Caco-2 (cell line): ENCODE measurements at regions of chr12 and their contacts with region 1.

Region 1: DNA sequence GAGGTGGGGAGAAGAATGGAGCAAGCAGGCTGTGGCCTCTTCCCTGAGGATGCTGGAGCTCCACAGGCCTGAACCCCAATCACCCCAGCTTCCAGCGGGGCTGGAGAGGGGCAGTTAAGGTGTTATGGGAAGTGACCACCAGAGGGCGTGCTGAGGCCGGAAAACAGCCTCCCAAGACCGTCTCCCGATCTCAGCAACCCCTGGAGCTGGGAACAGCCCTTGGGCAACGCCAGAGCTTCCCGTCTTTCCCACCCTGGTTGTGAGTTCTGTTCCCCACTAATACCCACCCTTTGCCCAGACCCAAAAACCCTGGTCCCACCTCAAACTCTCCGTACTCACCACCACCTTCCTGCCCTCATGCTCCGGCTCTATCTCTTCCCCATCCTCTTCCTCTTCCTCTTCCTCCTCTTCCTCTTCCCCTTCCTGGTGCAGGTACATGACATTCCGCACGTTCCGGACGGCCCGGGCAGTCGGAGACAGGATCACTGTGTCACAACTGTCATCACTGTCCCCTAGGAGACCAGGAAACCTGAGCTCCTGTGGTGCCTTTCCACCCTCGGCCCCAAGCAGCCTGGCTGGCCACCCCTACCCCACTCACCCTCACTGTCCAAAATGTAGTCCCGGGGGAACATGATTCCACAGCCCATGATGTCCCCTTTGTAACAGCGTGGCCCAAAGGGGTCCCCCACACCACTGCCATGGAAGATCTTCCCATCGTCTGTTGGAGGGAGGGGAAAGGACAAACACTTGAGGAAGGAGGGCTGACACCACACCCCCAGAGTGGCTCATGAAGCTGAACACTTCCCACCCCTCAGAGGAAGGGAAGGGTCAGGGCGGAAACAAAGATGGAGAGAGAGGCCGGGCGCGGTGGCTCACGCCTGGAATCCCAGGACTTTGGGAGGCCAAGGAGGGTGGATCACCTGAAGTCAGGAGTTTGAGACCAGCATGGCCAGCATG is 12.9 kb downstream of the SPRYD3 start:
- DNase-seq: peak; percentile 79 to 83
- H3K4me3 ChIP-seq: no peak overlapping the region
- H3K4me3 Mint-ChIP-seq: peak overlapping the region; percentile 31
- H3K27ac Mint-ChIP-seq: peak overlapping the region; percentile 14
- H3K4me1 ChIP-seq: peaks cover 7% of the 10 kb centered on the region
- H3K4me1 Mint-ChIP-seq: peaks cover 6% of the 10 kb centered on the region
- H3K27me3 ChIP-seq: no peaks in the 10 kb centered on the region
- H3K27me3 Mint-ChIP-seq: no peaks in the 10 kb centered on the region
- CTCF ChIP-seq: peak; percentile 76 to 86

Region 2: DNA sequence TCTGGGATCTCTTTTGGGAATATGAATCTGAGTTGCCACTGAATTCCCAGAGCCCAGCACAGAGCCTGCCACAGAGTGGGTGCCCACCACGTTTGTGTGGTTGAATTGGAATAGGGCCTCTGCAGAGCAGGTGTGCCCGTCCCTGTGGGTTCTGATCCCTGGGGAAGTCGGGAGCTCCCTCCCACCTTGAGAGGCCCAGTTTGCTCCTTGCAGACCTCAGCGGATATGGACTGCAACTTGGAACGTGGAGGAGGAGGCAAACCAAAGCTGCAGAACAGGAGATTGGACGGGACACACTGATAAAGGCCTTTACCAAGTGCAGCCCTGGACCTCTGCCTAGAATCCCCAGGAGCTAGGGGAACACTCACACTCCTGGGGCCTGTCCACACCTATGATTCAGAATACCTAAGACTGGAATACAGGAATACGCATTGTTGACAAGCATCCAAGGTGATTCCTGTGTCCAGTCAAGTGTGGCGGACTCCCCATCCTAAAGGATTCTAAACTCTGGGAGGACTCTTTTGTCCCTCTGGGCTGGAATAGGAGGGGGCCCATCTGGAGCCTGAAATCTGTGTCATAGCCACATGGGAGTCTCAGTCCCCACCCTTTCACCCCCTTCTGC is 291.5 kb before region 1 on chr12:
- CTCF ChIA-PET with region 1: no interaction called
- POLR2A ChIA-PET with region 1: no interaction called
- intact Hi-C with region 1: no loop called
- DNase-seq: no peak
- H3K4me3 ChIP-seq: no peak overlapping the region
- H3K4me3 Mint-ChIP-seq: no peak overlapping the region
- H3K27ac Mint-ChIP-seq: no peak overlapping the region
- H3K4me1 ChIP-seq: no peaks in the 10 kb centered on the region
- H3K4me1 Mint-ChIP-seq: no peaks in the 10 kb centered on the region
- H3K27me3 ChIP-seq: no peaks in the 10 kb centered on the region
- H3K27me3 Mint-ChIP-seq: peaks cover 6% of the 10 kb centered on the region
- CTCF ChIP-seq: no peak

Region 3: DNA sequence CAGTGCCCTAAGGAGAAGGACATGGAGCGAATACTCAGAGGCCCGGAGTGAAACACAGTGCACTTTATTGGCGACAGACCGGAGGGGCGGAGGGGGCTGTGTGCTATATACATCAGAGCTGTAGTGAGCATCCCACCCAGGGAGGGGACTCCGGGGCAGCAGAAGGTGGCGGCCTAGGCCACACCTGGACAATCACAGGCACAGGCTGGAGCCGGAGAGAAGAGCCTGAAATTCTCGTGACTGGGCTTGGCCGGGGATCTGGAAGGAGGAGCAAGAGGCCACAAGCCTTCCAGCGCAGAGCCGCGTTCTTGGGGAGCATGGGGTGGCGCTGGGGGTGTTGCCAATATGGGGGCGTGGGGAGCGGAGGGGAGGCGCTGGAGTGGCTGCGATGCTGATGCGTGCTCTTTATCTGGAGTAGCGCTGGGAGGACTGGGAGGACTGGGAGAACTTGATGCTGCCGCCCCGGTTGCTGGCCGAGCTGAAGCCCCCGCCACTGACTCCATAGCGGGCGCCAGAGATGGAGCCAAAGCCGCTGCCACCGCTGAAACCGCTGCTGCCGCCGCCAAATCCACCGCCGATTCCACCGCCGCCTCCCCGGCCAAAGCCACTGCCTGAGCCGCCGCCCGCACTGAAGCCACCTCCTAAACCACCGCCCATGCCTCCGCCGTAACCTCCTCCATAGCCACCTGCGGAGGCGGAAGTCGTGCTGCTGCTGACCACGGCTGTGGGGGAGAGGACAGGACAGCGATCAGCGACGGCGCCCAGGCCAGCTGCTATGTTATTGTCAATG is 276.4 kb before region 1 on chr12:
- CTCF ChIA-PET with region 1: no interaction called
- POLR2A ChIA-PET with region 1: no interaction called
- intact Hi-C with region 1: no loop called
- DNase-seq: no peak
- H3K4me3 ChIP-seq: no peak overlapping the region
- H3K4me3 Mint-ChIP-seq: no peak overlapping the region
- H3K27ac Mint-ChIP-seq: no peak overlapping the region
- H3K4me1 ChIP-seq: no peaks in the 10 kb centered on the region
- H3K4me1 Mint-ChIP-seq: no peaks in the 10 kb centered on the region
- H3K27me3 ChIP-seq: no peaks in the 10 kb centered on the region
- H3K27me3 Mint-ChIP-seq: peaks cover 7% of the 10 kb centered on the region
- CTCF ChIP-seq: no peak

Region 4: GRCh38 chr12:53054112-53054833 is 12.0 kb before region 1 on chr12:
- CTCF ChIA-PET with region 1: interaction called, 32 read pairs
- POLR2A ChIA-PET with region 1: no interaction called
- intact Hi-C with region 1: no loop called
- DNase-seq: peak; percentile 96 to 98
- H3K4me3 ChIP-seq: peak overlapping the region; percentile 78
- H3K4me3 Mint-ChIP-seq: peak overlapping the region; percentile 98
- H3K27ac Mint-ChIP-seq: peak overlapping the region; percentile 97
- H3K4me1 ChIP-seq: peaks cover 40% of the 10 kb centered on the region
- H3K4me1 Mint-ChIP-seq: peaks cover 14% of the 10 kb centered on the region
- H3K27me3 ChIP-seq: no peaks in the 10 kb centered on the region
- H3K27me3 Mint-ChIP-seq: no peaks in the 10 kb centered on the region
- CTCF ChIP-seq: no peak

Region 5: GRCh38 chr12:53079226-53080117 is 13.2 kb after region 1 on chr12 and contains the start of gene SPRYD3:
- CTCF ChIA-PET with region 1: interaction called, 47 read pairs
- POLR2A ChIA-PET with region 1: interaction called, 18 read pairs
- intact Hi-C with region 1: no loop called
- DNase-seq: peak; percentile 97 to 98
- H3K4me3 ChIP-seq: peak within 1 kb of the TSS; percentile 71
- H3K4me3 Mint-ChIP-seq: peak within 1 kb of the TSS; percentile 89
- H3K27ac Mint-ChIP-seq: peak within 1 kb of the TSS; percentile 94
- H3K4me1 ChIP-seq: peaks cover 4% of the 10 kb centered on the region; the same call in 1 of the 2 replicates
- H3K4me1 Mint-ChIP-seq: peaks cover 11% of the 10 kb centered on the region
- H3K27me3 ChIP-seq: no peaks in the 10 kb centered on the region
- H3K27me3 Mint-ChIP-seq: no peaks in the 10 kb centered on the region
- CTCF ChIP-seq: no peak
- total RNA-seq, gene SPRYD3: 8.2 and 8.8 TPM in 2 replicates

Region 6: GRCh38 chr12:53098982-53099651 is 32.9 kb after region 1 on chr12:
- CTCF ChIA-PET with region 1: interaction called, 95 read pairs
- POLR2A ChIA-PET with region 1: interaction called, 4 read pairs
- intact Hi-C with region 1: loop called (anchors 1 kb)
- DNase-seq: peak; percentile 90
- H3K4me3 ChIP-seq: no peak overlapping the region
- H3K4me3 Mint-ChIP-seq: peak overlapping the region; percentile 68
- H3K27ac Mint-ChIP-seq: peak overlapping the region; percentile 49
- H3K4me1 ChIP-seq: peaks cover 36% of the 10 kb centered on the region
- H3K4me1 Mint-ChIP-seq: peaks cover 42% of the 10 kb centered on the region
- H3K27me3 ChIP-seq: no peaks in the 10 kb centered on the region
- H3K27me3 Mint-ChIP-seq: no peaks in the 10 kb centered on the region
- CTCF ChIP-seq: peak; percentile 92 to 93

Region 7: GRCh38 chr12:53180220-53180930 is 114.1 kb after region 1 on chr12 and contains the starts of genes CSAD and ZNF740:
- CTCF ChIA-PET with region 1: interaction called, 17 read pairs
- POLR2A ChIA-PET with region 1: interaction called, 3 read pairs
- intact Hi-C with region 1: no loop called
- DNase-seq: peak; percentile 98
- H3K4me3 ChIP-seq: peak within 1 kb of the TSS; percentile 71
- H3K4me3 Mint-ChIP-seq: peak within 1 kb of the TSS; percentile 83
- H3K27ac Mint-ChIP-seq: peak within 1 kb of the TSS; percentile 85
- H3K4me1 ChIP-seq: peaks cover 21% of the 10 kb centered on the region
- H3K4me1 Mint-ChIP-seq: peaks cover 23% of the 10 kb centered on the region
- H3K27me3 ChIP-seq: no peaks in the 10 kb centered on the region
- H3K27me3 Mint-ChIP-seq: no peaks in the 10 kb centered on the region
- CTCF ChIP-seq: no peak
- total RNA-seq, gene CSAD: 20.1 and 23.0 TPM in 2 replicates
- total RNA-seq, gene ZNF740: 35.8 and 43.0 TPM in 2 replicates

Region 8: GRCh38 chr12:53190108-53190729 is 124.0 kb after region 1 on chr12:
- CTCF ChIA-PET with region 1: interaction called, 13 read pairs
- POLR2A ChIA-PET with region 1: no interaction called
- intact Hi-C with region 1: loop called (anchors 1 kb)
- DNase-seq: peak; percentile 56 to 66
- H3K4me3 ChIP-seq: no peak overlapping the region
- H3K4me3 Mint-ChIP-seq: no peak overlapping the region
- H3K27ac Mint-ChIP-seq: no peak overlapping the region
- H3K4me1 ChIP-seq: no peaks in the 10 kb centered on the region
- H3K4me1 Mint-ChIP-seq: no peaks in the 10 kb centered on the region
- H3K27me3 ChIP-seq: no peaks in the 10 kb centered on the region
- H3K27me3 Mint-ChIP-seq: no peaks in the 10 kb centered on the region
- CTCF ChIP-seq: peak; percentile 69 to 89

Region 9: GRCh38 chr12:53287741-53288216 is 221.5 kb after region 1 on chr12:
- CTCF ChIA-PET with region 1: interaction called, 3 read pairs
- POLR2A ChIA-PET with region 1: no interaction called
- intact Hi-C with region 1: loop called (anchors 1 kb)
- DNase-seq: peak; percentile 65 to 76
- H3K4me3 ChIP-seq: no peak overlapping the region
- H3K4me3 Mint-ChIP-seq: no peak overlapping the region
- H3K27ac Mint-ChIP-seq: no peak overlapping the region
- H3K4me1 ChIP-seq: no peaks in the 10 kb centered on the region
- H3K4me1 Mint-ChIP-seq: no peaks in the 10 kb centered on the region
- H3K27me3 ChIP-seq: no peaks in the 10 kb centered on the region
- H3K27me3 Mint-ChIP-seq: no peaks in the 10 kb centered on the region
- CTCF ChIP-seq: peak; percentile 72 to 76

Region 10: GRCh38 chr12:53892760-53893159 is 826.5 kb after region 1 on chr12:
- CTCF ChIA-PET with region 1: no interaction called
- POLR2A ChIA-PET with region 1: no interaction called
- intact Hi-C with region 1: no loop called
- DNase-seq: no peak
- H3K4me3 ChIP-seq: no peak overlapping the region
- H3K4me3 Mint-ChIP-seq: no peak overlapping the region
- H3K27ac Mint-ChIP-seq: no peak overlapping the region
- H3K4me1 ChIP-seq: no peaks in the 10 kb centered on the region
- H3K4me1 Mint-ChIP-seq: no peaks in the 10 kb centered on the region
- H3K27me3 ChIP-seq: no peaks in the 10 kb centered on the region
- H3K27me3 Mint-ChIP-seq: peaks cover 13% of the 10 kb centered on the region
- CTCF ChIP-seq: no peak